ENCODE measurements at regions of chr1 and their contacts with region 1.

Region 1: GRCh38 chr1:53393325-53393792 is 65.5 kb upstream of the LRP8 start:
- DNase-seq: peak; percentile 78 to 97 (median 88)

Region 2: DNA sequence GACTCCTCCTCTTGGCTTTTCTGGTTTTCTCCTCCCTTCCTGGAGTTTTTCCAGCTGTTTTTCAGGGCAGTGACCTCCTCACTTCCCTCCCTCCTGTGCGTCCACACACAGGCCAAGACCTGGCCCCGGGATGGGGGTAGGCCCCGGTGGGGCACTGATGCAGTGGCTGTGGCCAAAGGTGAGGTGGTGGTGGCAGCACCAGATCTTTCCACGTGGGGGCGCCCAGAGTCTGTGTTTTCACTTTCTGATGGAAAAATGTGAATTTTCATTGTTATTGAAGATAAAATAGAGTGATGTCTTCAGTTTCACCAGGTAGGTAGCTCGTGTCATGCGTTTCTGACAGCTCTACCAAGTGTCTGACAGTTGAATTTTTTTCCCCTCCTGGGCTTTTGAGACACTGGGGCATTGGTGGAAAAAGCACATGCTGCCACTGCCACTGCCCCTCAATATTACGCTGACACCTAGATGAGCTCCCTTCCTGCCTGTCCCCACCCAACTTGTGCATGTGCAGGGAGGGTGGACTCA is 115.1 kb before region 1 on chr1:
- intact Hi-C with region 1: loop called (anchors 1 kb)
- DNase-seq: peak; percentile 34 to 92 (median 70)

Region 3: DNA sequence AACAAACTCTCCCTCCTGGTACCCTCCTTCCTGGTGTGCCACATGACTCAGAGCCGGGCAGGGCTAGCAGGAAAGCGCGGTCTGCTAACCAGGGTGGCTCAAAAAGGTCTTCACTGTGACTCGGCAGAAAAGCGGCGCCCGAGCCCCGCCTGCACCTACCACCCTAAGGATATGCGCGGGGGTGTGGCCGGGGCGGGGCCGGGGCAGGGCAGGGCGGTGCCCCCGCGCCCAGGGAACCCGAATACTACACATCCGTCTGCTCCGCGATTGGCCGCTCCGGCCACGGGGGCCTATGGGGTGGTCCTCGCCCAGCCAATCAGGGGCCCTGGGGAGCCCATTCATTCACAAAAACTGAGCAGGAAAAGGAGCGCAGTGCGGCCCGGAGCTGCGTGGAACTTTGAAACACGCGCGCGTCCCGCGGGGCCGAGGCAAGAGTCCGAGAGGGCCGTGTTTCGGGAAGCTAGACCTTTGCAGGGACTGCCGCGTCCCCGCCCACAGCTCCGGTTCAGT is 67.2 kb before region 1 on chr1:
- intact Hi-C with region 1: loop called (anchors 5 kb)
- DNase-seq: peak; percentile 53 to 97 (median 78)

Measured in posterior cingulate gyrus (tissue), 11 donors.